H1 (cell line): ENCODE measurements at regions of chr10 and their contacts with region 1.

Region 1: GRCh38 chr10:104045151-104046089 is 40.3 kb downstream of the COL17A1 start:
- DNase-seq: peak; percentile 39 to 72
- H3K4me3 ChIP-seq: no peak overlapping the region
- H3K27ac ChIP-seq: no peak overlapping the region
- H3K4me1 ChIP-seq: peaks cover 0 to 4% (median 2%) of the 10 kb centered on the region in 4 experiments; a peak in 3 of 7 replicates
- H3K27me3 ChIP-seq: no peaks in the 10 kb centered on the region
- CTCF ChIP-seq: peak; percentile 66 to 90 (median 84)
- EP300 ChIP-seq: no peak
- POLR2A ChIP-seq: no peak
- RAD21 ChIP-seq: peak; percentile 93 to 97

Region 2: GRCh38 chr10:104034401-104035193 is 10.8 kb before region 1 on chr10:
- CTCF ChIA-PET with region 1: interaction called, 16 read pairs
- POLR2A ChIA-PET with region 1: interaction called, 6 read pairs
- DNase-seq: peak in 1 of 2 experiments; percentile 46
- H3K4me3 ChIP-seq: no peak overlapping the region
- H3K27ac ChIP-seq: no peak overlapping the region
- H3K4me1 ChIP-seq: peaks cover 3 to 15% (median 10%) of the 10 kb centered on the region in 4 experiments; a peak in 5 of 7 replicates
- H3K27me3 ChIP-seq: no peaks in the 10 kb centered on the region
- CTCF ChIP-seq: no peak
- EP300 ChIP-seq: no peak
- POLR2A ChIP-seq: no peak
- RAD21 ChIP-seq: no peak

Region 3: DNA sequence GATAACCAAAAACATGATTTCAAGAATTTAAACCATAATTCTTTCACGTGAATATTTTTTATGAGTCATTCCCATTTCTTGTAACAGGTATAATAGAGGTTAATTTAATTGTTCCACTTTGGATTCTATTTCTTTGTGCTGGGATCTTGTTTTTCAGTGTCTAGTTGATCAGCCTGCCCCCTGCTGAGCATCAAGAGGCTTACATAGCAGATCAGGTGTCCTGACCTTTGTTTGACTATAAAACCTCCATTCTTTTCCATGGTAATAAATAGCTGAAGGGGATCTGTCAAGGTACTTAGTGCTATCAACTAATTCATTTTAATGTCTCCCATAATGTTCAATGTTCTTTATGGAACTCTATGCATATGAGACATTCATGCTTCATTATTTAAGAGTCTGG is 35.3 kb after region 1 on chr10:
- CTCF ChIA-PET with region 1: no interaction called
- POLR2A ChIA-PET with region 1: no interaction called
- DNase-seq: no peak
- H3K4me3 ChIP-seq: no peak overlapping the region
- H3K27ac ChIP-seq: no peak overlapping the region
- H3K4me1 ChIP-seq: peaks cover 6 to 11% (median 9%) of the 10 kb centered on the region in 4 experiments
- H3K27me3 ChIP-seq: no peaks in the 10 kb centered on the region
- CTCF ChIP-seq: peak in 1 of 3 experiments; percentile 13; a peak in 1 of 4 replicates
- EP300 ChIP-seq: no peak
- POLR2A ChIP-seq: no peak
- RAD21 ChIP-seq: 0 out of 4 replicates have a peak, but pooled peaks of 1 of the 2 experiments have one; percentile 18

Region 4: DNA sequence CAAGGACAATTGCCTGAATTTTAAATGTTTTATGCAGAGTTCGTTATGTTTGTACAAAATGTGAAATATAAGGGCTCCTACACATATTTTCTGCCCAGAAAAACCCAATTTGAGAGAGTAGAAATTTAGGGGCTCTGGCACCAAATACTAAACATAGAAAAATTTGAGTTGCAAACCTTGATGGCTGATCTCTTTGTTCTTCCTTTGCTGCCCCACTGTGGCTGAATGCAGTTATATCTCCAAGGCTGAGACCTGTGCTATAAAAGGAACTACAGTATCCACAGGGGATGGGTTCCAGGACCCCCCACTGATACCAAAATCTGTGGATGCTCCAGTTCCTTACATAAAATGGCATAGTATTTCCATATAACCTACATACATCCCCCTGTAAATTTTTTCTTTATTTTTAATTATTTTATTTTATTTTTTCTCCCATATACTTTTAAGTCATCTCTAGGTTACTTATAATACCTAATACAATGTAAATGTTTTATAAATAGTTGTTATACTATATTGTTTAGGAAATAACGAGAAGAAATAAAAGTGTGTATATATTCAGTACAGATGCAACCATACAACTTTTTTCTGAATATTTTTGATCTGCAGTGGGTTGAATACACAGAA is 164.3 kb after region 1 on chr10:
- CTCF ChIA-PET with region 1: interaction called, 17 read pairs
- POLR2A ChIA-PET with region 1: no interaction called
- DNase-seq: peak in 1 of 2 experiments; percentile 48
- H3K4me3 ChIP-seq: no peak overlapping the region
- H3K27ac ChIP-seq: no peak overlapping the region
- H3K4me1 ChIP-seq: no peaks in the 10 kb centered on the region
- H3K27me3 ChIP-seq: no peaks in the 10 kb centered on the region
- CTCF ChIP-seq: peak in 2 of 3 experiments; percentile 65 to 69; a peak in 3 of 4 replicates
- EP300 ChIP-seq: no peak
- POLR2A ChIP-seq: no peak
- RAD21 ChIP-seq: peak; percentile 79 to 86